Activated T-helper 2 cell treated with anti-CD3 and anti-CD28 coated beads, Interferon-gamma antibody, Interleukin-2, Interleukin-4, amounts not matched to agents 10 μg/mL and 5 μg/mL and 100 μg/mL, durations not matched to agents 14 hours and 24 hours and 36 hours (primary cell): ENCODE measurements at regions of chr11 and their contacts with region 1.

Region 1: GRCh38 chr11:33700425-33701271 is at the start of gene C11orf91:
- DNase-seq: peak; percentile 92
- H3K4me3 Mint-ChIP-seq: peak within 1 kb of the TSS; percentile 84
- H3K27ac Mint-ChIP-seq: peak within 1 kb of the TSS; percentile 14
- H3K4me1 Mint-ChIP-seq: peaks cover 14% of the 10 kb centered on the region
- H3K27me3 Mint-ChIP-seq: peaks cover 31% of the 10 kb centered on the region
- total RNA-seq, gene C11orf91: not detected in 2 replicates

Region 2: DNA sequence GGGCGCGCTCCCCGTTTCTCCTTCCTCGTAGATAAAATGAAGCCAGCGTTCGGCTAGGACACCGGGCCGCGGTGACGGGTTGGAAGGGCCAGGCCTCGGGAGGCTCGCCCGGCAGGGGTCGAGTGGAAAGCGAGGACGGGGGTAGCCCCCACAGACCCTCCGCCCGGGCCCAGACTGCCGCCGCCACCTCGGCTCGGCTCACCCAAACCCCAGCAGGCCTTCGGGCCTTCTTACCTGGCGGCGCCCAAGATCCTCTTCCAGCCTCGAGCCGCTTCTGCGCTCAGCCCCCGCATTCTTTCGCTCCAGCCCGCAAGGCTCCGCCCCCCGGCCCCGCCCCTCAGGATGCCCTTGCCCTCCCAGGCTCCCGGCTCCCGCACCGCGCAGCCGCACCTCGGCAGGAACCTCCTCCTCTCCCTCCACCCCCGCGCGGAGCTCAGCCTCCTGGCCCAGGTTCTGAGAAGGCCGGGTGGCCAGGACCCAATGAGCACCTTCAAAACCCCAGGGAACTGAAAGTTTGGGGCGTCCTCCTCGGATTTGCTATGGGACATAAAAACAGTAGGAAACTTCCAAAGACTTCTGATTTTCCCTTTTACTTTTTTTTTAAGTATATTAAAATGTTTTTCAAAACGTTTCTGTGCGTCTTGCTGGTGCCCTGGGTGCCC is 35.6 kb after region 1 on chr11 and contains the start of gene CD59:
- intact Hi-C with region 1: loop called (anchors 5 kb)
- DNase-seq: peak; percentile 79
- H3K4me3 Mint-ChIP-seq: peak within 1 kb of the TSS; percentile 87
- H3K27ac Mint-ChIP-seq: peak within 1 kb of the TSS; percentile 86
- H3K4me1 Mint-ChIP-seq: peaks cover 35% of the 10 kb centered on the region
- H3K27me3 Mint-ChIP-seq: peaks cover 12% of the 10 kb centered on the region
- total RNA-seq, gene CD59: 165 and 173 TPM in 2 replicates

Region 3: GRCh38 chr11:33773987-33774735 is 73.5 kb after region 1 on chr11 and contains the start of gene FBXO3:
- intact Hi-C with region 1: loop called (anchors 2 kb)
- DNase-seq: peak; percentile 74
- H3K4me3 Mint-ChIP-seq: peak within 1 kb of the TSS; percentile 93
- H3K27ac Mint-ChIP-seq: peak within 1 kb of the TSS; percentile 87
- H3K4me1 Mint-ChIP-seq: peaks cover 35% of the 10 kb centered on the region
- H3K27me3 Mint-ChIP-seq: peaks cover 28% of the 10 kb centered on the region
- total RNA-seq, gene FBXO3: 13.9 TPM in 2 replicates